ENCODE measurements at regions of chr19 and their contacts with region 1.

Region 1: GRCh38 chr19:42450314-42450934 is 7.7 kb upstream of the CXCL17 start:
- DNase-seq: peak; percentile 90
- ATAC-seq: peak; percentile 99
- H3K4me3 Mint-ChIP-seq: no peak overlapping the region
- H3K27ac Mint-ChIP-seq: no peak overlapping the region
- H3K4me1 Mint-ChIP-seq: peaks cover 38% of the 10 kb centered on the region
- H3K27me3 Mint-ChIP-seq: peaks cover 2% of the 10 kb centered on the region

Region 2: DNA sequence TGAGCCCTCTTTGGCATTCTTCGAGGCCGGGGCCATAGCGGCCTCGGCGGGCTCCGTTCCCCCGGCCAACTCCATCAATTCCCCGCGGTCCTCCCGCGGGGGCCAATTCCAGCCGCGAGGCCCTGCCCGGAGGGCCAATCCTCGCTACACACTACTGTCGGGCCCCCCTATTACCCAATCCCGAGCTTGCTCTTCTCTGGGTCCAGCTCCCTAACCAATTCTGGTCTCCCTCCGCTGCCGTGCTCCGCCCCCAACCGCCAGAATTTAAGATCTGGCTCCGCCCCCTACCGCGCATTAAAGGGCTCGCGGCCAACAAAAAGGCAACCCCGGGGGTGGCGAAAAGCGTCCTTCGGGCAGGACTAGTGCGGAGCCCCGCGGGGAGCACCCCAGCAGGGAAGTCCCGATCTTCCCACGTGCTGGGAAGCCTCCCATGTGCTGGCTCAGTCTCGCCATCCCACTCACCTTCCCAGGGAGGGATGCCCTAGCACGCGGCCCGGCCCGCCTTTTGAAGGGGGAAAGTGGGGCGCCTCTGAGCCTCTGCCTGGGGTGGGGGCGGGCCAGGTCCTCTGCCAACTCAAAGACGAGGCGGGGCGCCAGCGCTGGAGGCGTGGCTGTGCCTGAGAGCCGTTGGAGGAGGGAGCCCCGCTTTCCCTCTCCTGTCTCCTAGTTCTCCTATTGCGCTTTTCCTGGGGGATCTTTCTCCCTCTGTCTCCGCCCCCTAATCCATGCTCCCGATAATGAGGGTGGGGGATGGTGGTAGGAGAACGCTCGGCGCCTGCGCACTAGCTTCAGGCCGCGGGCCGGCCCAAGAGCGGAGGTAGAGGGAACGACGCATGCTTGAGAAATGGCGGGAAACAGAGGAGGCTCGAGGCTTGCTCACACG is 26.7 kb before region 1 on chr19:
- CTCF ChIA-PET with region 1: interaction called, 10 read pairs
- DNase-seq: peak; percentile 97
- ATAC-seq: peak; percentile 98
- H3K4me3 Mint-ChIP-seq: peak overlapping the region; percentile 94
- H3K27ac Mint-ChIP-seq: peak overlapping the region; percentile 90
- H3K4me1 Mint-ChIP-seq: peaks cover 37% of the 10 kb centered on the region
- H3K27me3 Mint-ChIP-seq: peaks cover 3% of the 10 kb centered on the region

Region 3: DNA sequence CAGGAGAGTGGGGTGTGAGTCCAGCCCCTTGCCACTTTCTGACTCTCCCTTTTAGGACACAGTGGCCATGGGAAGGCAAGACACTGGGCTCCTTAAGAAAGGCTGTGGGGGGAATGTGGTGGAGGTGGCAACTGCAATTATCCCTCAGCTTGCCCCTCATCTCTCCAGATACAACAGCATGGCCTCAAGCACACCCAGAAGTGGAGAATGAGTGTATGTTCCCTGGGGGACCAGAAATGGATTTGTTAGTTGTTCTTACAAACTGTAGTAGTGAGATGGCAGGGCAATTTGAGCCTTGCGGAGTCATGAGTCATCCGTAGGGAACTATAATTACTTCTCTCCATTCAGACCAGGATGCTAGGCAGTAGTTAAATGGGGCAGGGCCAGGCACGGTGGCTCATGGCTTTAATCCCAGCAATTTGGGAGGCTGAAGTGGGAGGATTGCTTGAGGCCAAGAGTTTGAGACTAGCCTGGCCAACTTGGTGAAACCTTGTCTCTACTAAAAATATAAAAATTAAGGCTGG is 17.9 kb after region 1 on chr19:
- CTCF ChIA-PET with region 1: interaction called, 20 read pairs
- DNase-seq: no peak
- ATAC-seq: no peak
- H3K4me3 Mint-ChIP-seq: no peak overlapping the region
- H3K27ac Mint-ChIP-seq: no peak overlapping the region
- H3K4me1 Mint-ChIP-seq: peaks cover 37% of the 10 kb centered on the region
- H3K27me3 Mint-ChIP-seq: peaks cover 8% of the 10 kb centered on the region

Region 4: GRCh38 chr19:42512743-42513304 is 62.4 kb after region 1 on chr19:
- CTCF ChIA-PET with region 1: interaction called, 22 read pairs
- DNase-seq: peak; percentile 5
- ATAC-seq: no peak
- H3K4me3 Mint-ChIP-seq: no peak overlapping the region
- H3K27ac Mint-ChIP-seq: peak overlapping the region; percentile 54
- H3K4me1 Mint-ChIP-seq: peaks cover 46% of the 10 kb centered on the region
- H3K27me3 Mint-ChIP-seq: no peaks in the 10 kb centered on the region

Region 5: DNA sequence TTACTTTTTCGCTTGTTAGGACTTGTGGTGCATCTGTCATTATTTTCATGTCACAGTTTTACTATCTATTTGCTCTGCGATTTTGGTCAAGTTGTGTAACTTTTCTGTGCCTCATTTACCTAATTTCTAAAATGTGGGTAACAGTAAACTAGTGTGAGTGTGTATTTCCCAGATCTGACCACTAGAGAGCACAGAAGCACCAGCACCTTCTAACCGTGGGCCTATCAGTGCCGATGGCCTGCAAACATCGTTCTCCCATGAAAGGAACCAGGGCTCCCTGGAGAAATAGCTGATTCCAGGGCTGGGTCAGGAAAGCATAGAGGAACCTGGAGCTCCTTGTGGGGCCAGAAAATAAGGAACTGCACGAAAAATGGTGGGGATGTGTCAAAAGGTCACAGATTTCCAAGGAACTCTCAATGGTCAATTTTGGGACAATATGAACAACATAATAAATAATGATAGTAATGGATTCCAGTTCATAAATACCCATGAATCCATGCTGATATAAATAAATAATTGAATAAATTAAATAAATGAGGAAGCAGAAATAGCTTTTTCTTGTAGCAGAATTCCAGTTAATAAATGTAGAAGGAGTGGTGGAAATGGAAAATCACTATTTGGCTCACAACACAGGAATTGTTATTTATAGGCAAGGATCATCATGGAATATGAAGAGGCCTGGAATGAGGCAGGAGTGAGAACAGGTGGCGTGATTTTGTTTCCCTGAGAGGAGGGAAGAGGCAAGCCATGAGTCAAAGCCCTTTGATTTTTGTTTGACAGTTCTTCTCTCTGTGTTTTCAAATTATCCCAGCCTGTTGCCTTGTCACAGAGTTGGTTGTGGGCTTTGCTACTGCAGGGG is 113.2 kb after region 1 on chr19:
- CTCF ChIA-PET with region 1: interaction called, 18 read pairs
- DNase-seq: peak; percentile 45
- ATAC-seq: peak; percentile 87
- H3K4me3 Mint-ChIP-seq: no peak overlapping the region
- H3K27ac Mint-ChIP-seq: no peak overlapping the region
- H3K4me1 Mint-ChIP-seq: peaks cover 7% of the 10 kb centered on the region
- H3K27me3 Mint-ChIP-seq: peaks cover 28% of the 10 kb centered on the region